CD8-positive, alpha-beta memory T cell (primary cell): ENCODE measurements at regions of chr9 and their contacts with region 1.

Region 1: GRCh38 chr9:32526041-32526706 is at the start of gene RIGI:
- DNase-seq: peak; percentile 79 to 89 (median 83)
- H3K4me3 ChIP-seq: peak within 1 kb of the TSS; percentile 90
- H3K4me3 Mint-ChIP-seq: peak within 1 kb of the TSS; percentile 86 to 98 (median 98)
- H3K27ac ChIP-seq: peak within 1 kb of the TSS; percentile 71
- H3K27ac Mint-ChIP-seq: peak within 1 kb of the TSS; percentile 78 to 99 (median 96)
- H3K4me1 ChIP-seq: peaks cover 28% of the 10 kb centered on the region
- H3K4me1 Mint-ChIP-seq: peaks cover 52 to 57% (median 54%) of the 10 kb centered on the region in 3 donors
- H3K27me3 ChIP-seq: no peaks in the 10 kb centered on the region
- H3K27me3 Mint-ChIP-seq: no peaks in the 10 kb centered on the region
- total RNA-seq, gene RIGI: 5.9 to 6.5 TPM

Region 2: DNA sequence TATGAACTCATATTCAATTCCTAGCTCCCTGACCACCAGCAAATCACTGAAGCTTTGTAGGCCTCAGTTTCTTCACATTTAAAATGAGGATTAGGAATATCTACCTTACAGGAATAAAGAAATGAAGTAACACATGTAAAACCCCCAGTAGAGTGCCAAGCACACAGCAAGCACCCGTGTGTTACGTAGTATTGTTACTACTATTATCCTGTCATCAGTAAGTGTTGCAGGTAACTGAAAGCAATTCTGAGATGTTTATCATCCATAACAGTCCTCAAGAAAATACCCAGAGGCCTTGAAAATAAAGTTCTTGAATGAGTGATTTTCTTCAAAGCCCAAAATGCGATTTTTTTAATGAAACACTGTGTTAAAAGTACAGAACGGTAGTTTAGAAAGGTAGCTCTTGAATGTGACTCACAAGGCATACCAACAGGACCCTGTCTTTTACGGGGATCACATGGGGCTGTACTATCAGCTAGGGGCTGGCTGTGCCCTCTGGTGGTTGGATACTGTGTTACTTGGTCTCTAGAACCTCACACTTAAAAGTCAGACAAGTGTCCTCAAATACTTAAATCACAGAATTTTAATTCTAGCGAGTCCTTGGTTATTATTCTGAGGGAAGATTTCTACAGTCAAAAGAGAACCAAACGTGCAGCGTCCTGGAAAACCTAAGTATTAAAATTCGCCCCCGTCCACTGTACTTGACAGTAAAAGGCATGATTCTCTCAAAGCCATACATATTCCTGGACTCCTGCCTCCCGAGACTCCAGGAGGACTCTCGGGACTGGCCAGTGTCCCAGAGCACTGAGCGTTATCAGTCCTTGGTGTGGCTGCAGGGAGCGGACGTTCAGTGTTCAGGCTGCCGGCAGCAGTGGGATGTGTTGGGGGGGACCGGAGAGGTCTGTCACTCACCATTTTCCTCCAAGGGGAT is 46.1 kb after region 1 on chr9:
- CTCF ChIA-PET with region 1: interaction called, 31 read pairs
- POLR2A ChIA-PET with region 1: interaction called, 3 read pairs
- DNase-seq: peak; percentile 56 to 86 (median 73)
- H3K4me3 ChIP-seq: peak overlapping the region; percentile 98
- H3K4me3 Mint-ChIP-seq: peak overlapping the region; percentile 98 to 100 (median 99)
- H3K27ac ChIP-seq: peak overlapping the region; percentile 92
- H3K27ac Mint-ChIP-seq: peak overlapping the region; percentile 96 to 99 (median 99)
- H3K4me1 ChIP-seq: peaks cover 21% of the 10 kb centered on the region
- H3K4me1 Mint-ChIP-seq: peaks cover 33 to 40% (median 35%) of the 10 kb centered on the region in 3 donors
- H3K27me3 ChIP-seq: no peaks in the 10 kb centered on the region
- H3K27me3 Mint-ChIP-seq: peaks cover 0 to 3% of the 10 kb centered on the region in 2 donors